ENCODE measurements at regions of chr11 and their contacts with region 1.

Region 1: GRCh38 chr11:128530118-128531074 is 57.0 kb downstream of the ETS1 start:
- DNase-seq: peak in 1 of 14 experiments; percentile 4
- ATAC-seq: no peak
- H3K4me3 ChIP-seq: no peak overlapping the region
- H3K4me3 Mint-ChIP-seq: no peak overlapping the region
- H3K27ac ChIP-seq: no peak overlapping the region
- H3K27ac Mint-ChIP-seq: peak overlapping the region; percentile 3
- H3K4me1 ChIP-seq: peaks cover 32% of the 10 kb centered on the region
- H3K4me1 Mint-ChIP-seq: peaks cover 64% of the 10 kb centered on the region
- H3K27me3 ChIP-seq: no peaks in the 10 kb centered on the region
- H3K27me3 Mint-ChIP-seq: no peaks in the 10 kb centered on the region
- CTCF ChIP-seq: no peak

Region 2: GRCh38 chr11:128544471-128545051 is 14.2 kb after region 1 on chr11:
- CTCF ChIA-PET with region 1: interaction called, 8 read pairs
- POLR2A ChIA-PET with region 1: interaction called, 102 read pairs
- intact Hi-C with region 1: loop called (anchors 2 kb)
- DNase-seq: peak in 5 of 14 experiments; percentile 24 to 69 (median 39)
- ATAC-seq: peak; percentile 61
- H3K4me3 ChIP-seq: peak overlapping the region; percentile 4
- H3K4me3 Mint-ChIP-seq: peak overlapping the region; percentile 74
- H3K27ac ChIP-seq: no peak overlapping the region
- H3K27ac Mint-ChIP-seq: peak overlapping the region; percentile 94
- H3K4me1 ChIP-seq: peaks cover 31% of the 10 kb centered on the region
- H3K4me1 Mint-ChIP-seq: peaks cover 71% of the 10 kb centered on the region
- H3K27me3 ChIP-seq: no peaks in the 10 kb centered on the region
- H3K27me3 Mint-ChIP-seq: no peaks in the 10 kb centered on the region
- CTCF ChIP-seq: no peak

Region 3: DNA sequence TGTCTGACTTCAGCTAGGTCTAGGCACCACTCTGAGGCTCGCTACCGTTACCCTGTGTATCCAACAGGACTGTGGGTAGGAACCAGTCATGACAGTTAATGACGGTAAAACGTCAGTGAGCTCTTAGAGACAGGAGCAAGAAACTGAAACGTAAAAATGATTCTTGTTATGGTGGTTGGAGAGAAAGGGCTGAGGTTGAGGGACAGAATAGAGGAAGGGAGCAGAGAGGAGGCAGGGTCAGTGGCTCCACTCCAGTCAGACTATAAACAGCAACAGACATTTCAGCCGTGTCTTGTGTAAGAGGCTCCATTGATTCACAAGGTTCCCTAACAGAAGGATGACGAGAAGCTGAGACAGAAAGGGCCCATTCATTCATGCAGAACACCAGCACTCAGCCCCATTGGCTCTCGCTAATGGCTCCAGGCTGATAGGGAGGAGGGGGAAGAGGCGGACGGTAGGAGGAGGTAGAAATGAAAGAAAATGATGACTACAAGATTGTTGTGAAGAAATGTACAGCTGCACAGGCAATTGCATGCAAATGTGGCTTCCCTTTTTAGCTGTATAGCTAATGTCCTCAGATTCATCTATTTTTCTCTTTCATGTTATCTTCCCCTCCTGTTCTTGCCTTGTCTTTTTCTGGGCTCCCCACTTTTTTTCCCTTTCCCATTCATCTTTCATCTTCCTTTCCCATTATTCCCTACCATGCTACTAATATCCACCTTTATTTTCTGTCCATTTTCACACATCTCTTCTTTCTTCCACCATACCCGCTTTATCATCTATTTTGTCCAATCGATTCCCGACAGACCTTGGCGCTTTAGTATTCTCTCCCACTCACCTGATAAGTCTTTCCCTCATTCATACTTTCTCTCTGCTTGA is 22.6 kb after region 1 on chr11:
- CTCF ChIA-PET with region 1: interaction called, 7 read pairs
- POLR2A ChIA-PET with region 1: interaction called, 102 read pairs
- intact Hi-C with region 1: no loop called
- DNase-seq: peak in 4 of 14 experiments; percentile 35 to 72 (median 52)
- ATAC-seq: peak; percentile 20
- H3K4me3 ChIP-seq: peak overlapping the region; percentile 8
- H3K4me3 Mint-ChIP-seq: peak overlapping the region; percentile 54
- H3K27ac ChIP-seq: peak overlapping the region; percentile 5 to 50
- H3K27ac Mint-ChIP-seq: peak overlapping the region; percentile 94
- H3K4me1 ChIP-seq: peaks cover 60% of the 10 kb centered on the region
- H3K4me1 Mint-ChIP-seq: peaks cover 62% of the 10 kb centered on the region
- H3K27me3 ChIP-seq: no peaks in the 10 kb centered on the region
- H3K27me3 Mint-ChIP-seq: no peaks in the 10 kb centered on the region
- CTCF ChIP-seq: no peak